ENCODE measurements at regions of chr19 and their contacts with region 1.

Region 1: DNA sequence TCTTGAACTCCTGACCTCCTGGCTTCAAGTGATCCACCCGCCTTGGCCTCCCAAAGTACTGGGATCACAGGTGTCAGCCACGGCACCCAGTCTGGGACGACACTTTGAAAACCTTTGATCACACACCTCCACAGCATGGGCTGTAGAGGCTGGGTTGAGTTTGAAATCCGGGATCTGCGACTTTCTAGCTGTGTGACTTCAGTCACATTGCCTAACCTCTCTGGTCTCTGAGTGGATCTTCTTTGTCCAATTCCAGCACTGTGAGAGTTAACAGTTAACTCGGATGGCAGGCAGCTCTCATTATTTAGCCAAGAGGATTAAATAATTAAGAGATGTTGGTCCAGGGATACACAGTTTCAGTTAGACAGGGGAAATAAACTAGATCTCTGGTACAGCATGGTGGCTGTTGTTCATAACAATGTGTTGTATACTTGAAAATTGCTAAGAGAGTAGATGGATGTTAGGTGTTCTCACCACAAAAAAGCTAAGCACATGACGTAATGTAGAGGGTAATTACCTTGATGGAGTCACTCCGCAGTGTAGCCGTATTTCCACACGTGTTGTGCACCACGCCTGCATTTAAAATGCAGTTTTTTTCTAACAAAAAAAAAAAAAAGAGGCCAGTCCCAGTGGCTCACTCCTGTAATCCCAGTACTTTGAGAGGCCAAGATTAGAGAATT is 1.9 kb downstream of the GALP start:
- DNase-seq: no peak
- H3K4me3 ChIP-seq: no peak overlapping the region
- H3K27ac ChIP-seq: no peak overlapping the region
- H3K4me1 ChIP-seq: no peaks in the 10 kb centered on the region
- H3K27me3 ChIP-seq: peaks cover 71% of the 10 kb centered on the region
- CTCF ChIP-seq: no peak

Region 2: DNA sequence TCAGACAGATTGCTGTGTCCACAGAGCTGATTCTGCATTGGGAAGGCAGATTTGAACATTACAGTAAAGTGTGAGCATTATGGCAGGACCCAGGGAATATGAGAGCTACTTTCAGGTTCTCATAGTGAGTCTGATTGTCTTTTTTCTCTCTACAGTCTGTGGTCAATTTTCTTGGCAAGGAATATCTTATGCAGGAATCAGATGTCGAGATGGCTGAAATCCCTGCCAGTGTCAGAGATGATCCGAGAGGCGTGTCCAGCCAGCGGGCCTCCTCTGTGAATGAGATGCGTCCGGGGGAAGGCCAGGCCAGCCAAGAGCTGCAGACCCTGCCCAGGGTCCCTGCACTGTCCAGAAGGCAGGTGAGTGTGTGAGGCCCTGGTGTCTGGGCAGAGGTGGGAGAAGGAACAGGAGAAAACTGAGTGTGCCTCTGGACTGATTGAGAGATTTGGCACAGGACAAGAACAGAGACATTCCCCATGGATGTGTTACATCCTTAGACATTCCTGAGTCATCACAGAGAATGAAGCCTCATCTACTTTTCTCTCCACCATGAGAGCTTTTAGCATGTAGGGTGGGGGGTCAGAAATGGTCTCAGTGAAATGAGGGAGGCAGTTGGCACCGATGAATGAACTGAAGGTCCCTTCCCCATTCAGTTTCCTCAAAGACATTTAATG is 67.5 kb after region 1 on chr19:
- CTCF ChIA-PET with region 1: no interaction called
- POLR2A ChIA-PET with region 1: interaction called, 26 read pairs
- intact Hi-C with region 1: no loop called
- DNase-seq: no peak
- H3K4me3 ChIP-seq: no peak overlapping the region
- H3K27ac ChIP-seq: no peak overlapping the region
- H3K4me1 ChIP-seq: no peaks in the 10 kb centered on the region
- H3K27me3 ChIP-seq: no peaks in the 10 kb centered on the region
- CTCF ChIP-seq: no peak

Region 3: DNA sequence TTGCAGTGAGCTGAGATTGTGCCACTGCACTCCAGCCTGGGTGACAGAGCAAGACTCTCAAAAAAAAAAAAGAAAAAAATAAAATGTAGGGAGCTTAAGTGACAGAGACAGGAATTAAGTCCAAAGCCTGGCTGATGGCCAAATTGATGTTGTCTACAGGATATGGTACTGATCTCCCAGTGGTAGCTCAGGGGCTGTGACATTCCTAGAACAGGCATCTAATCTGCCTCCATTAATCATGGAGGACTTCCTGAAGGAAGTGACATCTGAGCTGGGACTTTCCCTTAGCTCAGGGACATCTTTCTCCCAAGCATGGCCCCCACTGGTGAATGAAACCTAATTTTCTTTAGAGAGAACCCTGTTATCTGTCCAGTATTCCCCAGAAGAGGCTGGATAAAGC is 83.4 kb after region 1 on chr19:
- CTCF ChIA-PET with region 1: no interaction called
- POLR2A ChIA-PET with region 1: no interaction called
- intact Hi-C with region 1: no loop called
- DNase-seq: no peak
- H3K4me3 ChIP-seq: no peak overlapping the region
- H3K27ac ChIP-seq: no peak overlapping the region
- H3K4me1 ChIP-seq: no peaks in the 10 kb centered on the region
- H3K27me3 ChIP-seq: no peaks in the 10 kb centered on the region
- CTCF ChIP-seq: no peak

Measured in PC-9 (cell line).